CD14-positive monocyte (primary cell): ENCODE measurements at regions of chr22 and their contacts with region 1.

Region 1: GRCh38 chr22:41857155-41857859 is 24.4 kb downstream of the SREBF2 start:
- DNase-seq: peak; percentile 54 to 78 (median 61)
- H3K4me3 ChIP-seq: no peak overlapping the region
- H3K4me3 Mint-ChIP-seq: no peak overlapping the region
- H3K27ac ChIP-seq: no peak overlapping the region
- H3K27ac Mint-ChIP-seq: peak overlapping the region in 5 of 7 donors; percentile 52 to 84 (median 82)
- H3K4me1 ChIP-seq: peaks cover 3 to 28% of the 10 kb centered on the region in 2 donors
- H3K4me1 Mint-ChIP-seq: peaks cover 29% of the 10 kb centered on the region
- H3K27me3 ChIP-seq: no peaks in the 10 kb centered on the region
- H3K27me3 Mint-ChIP-seq: peaks cover 0 to 1% (median 0%) of the 10 kb centered on the region in 3 donors
- CTCF ChIP-seq: peak; percentile 77

Region 2: GRCh38 chr22:41746567-41747400 is 110.5 kb before region 1 on chr22:
- intact Hi-C with region 1: loop called (anchors 2 to 5 kb)
- DNase-seq: peak; percentile 73 to 86 (median 79)
- H3K4me3 ChIP-seq: no peak overlapping the region
- H3K4me3 Mint-ChIP-seq: no peak overlapping the region
- H3K27ac ChIP-seq: no peak overlapping the region
- H3K27ac Mint-ChIP-seq: no peak overlapping the region
- H3K4me1 ChIP-seq: peaks cover 0 to 3% of the 10 kb centered on the region in 2 donors
- H3K4me1 Mint-ChIP-seq: peaks cover 7% of the 10 kb centered on the region
- H3K27me3 ChIP-seq: peaks cover 0 to 4% of the 10 kb centered on the region in 2 donors
- H3K27me3 Mint-ChIP-seq: peaks cover 9 to 15% (median 12%) of the 10 kb centered on the region in 3 donors
- CTCF ChIP-seq: peak; percentile 79

Region 3: GRCh38 chr22:41808400-41808799 is 48.9 kb before region 1 on chr22:
- intact Hi-C with region 1: no loop called
- DNase-seq: no peak
- H3K4me3 ChIP-seq: no peak overlapping the region
- H3K4me3 Mint-ChIP-seq: no peak overlapping the region
- H3K27ac ChIP-seq: peak overlapping the region in 1 of 2 donors; percentile 4
- H3K27ac Mint-ChIP-seq: peak overlapping the region in 1 of 7 donors; percentile 68
- H3K4me1 ChIP-seq: peaks cover 0 to 7% of the 10 kb centered on the region in 2 donors
- H3K4me1 Mint-ChIP-seq: peaks cover 11% of the 10 kb centered on the region
- H3K27me3 ChIP-seq: no peaks in the 10 kb centered on the region
- H3K27me3 Mint-ChIP-seq: no peaks in the 10 kb centered on the region
- CTCF ChIP-seq: no peak

Region 4: DNA sequence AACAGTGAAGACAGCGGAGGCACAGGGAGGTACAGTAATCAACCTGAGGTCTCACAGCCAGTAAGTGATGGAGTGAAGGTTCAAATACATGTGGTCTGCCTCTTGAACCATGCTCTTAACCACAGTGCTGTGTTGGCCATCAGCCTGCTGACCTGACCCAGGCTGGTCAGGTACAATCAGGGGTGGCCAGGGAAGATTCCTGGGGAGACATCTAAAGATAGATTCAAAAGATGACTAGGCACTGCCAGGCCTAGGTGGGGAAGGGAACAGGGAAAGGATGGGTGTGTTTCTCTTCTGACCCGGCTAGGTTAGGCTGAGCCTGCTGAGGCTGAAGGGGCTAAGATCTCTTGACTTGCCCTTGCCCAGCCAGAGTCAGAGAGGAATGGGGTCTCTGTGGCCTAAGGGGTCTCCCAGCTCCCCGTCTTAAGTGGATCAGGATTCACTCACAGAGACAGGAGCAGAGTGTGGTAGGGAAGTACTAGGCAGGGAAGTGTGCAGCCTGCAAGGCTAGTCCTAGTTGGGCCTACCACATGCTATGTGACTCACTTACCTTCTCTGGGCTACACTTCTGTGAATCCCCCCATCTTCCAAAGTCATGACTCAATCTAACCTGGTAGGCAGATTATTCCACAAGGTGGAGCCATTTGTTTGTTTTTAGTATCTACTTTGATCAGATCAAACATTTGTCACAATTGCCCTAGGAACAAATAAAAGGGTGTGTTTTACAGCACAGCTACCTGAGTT is 34.8 kb before region 1 on chr22:
- intact Hi-C with region 1: loop called (anchors 2 to 5 kb)
- DNase-seq: peak; percentile 40 to 88 (median 65)
- H3K4me3 ChIP-seq: no peak overlapping the region
- H3K4me3 Mint-ChIP-seq: no peak overlapping the region
- H3K27ac ChIP-seq: peak overlapping the region in 1 of 2 donors; percentile 28
- H3K27ac Mint-ChIP-seq: peak overlapping the region in 4 of 7 donors; percentile 25 to 79 (median 48)
- H3K4me1 ChIP-seq: no peaks in the 10 kb centered on the region
- H3K4me1 Mint-ChIP-seq: no peaks in the 10 kb centered on the region
- H3K27me3 ChIP-seq: no peaks in the 10 kb centered on the region
- H3K27me3 Mint-ChIP-seq: peaks cover 0 to 2% (median 0%) of the 10 kb centered on the region in 3 donors
- CTCF ChIP-seq: peak; percentile 63

Region 5: GRCh38 chr22:41910050-41911000 is 53.0 kb after region 1 on chr22:
- intact Hi-C with region 1: no loop called
- DNase-seq: no peak
- H3K4me3 ChIP-seq: peak overlapping the region in 1 of 3 experiments; percentile 32
- H3K4me3 Mint-ChIP-seq: peak overlapping the region; percentile 61 to 82
- H3K27ac ChIP-seq: no peak overlapping the region
- H3K27ac Mint-ChIP-seq: no peak overlapping the region
- H3K4me1 ChIP-seq: peaks cover 25 to 52% of the 10 kb centered on the region in 2 donors
- H3K4me1 Mint-ChIP-seq: peaks cover 28% of the 10 kb centered on the region
- H3K27me3 ChIP-seq: peaks cover 33 to 49% of the 10 kb centered on the region in 2 donors
- H3K27me3 Mint-ChIP-seq: peaks cover 44 to 62% (median 52%) of the 10 kb centered on the region in 3 donors
- CTCF ChIP-seq: no peak